Psoas muscle (tissue), 8 donors: ENCODE measurements at regions of chr6 and their contacts with region 1.

Region 1: DNA sequence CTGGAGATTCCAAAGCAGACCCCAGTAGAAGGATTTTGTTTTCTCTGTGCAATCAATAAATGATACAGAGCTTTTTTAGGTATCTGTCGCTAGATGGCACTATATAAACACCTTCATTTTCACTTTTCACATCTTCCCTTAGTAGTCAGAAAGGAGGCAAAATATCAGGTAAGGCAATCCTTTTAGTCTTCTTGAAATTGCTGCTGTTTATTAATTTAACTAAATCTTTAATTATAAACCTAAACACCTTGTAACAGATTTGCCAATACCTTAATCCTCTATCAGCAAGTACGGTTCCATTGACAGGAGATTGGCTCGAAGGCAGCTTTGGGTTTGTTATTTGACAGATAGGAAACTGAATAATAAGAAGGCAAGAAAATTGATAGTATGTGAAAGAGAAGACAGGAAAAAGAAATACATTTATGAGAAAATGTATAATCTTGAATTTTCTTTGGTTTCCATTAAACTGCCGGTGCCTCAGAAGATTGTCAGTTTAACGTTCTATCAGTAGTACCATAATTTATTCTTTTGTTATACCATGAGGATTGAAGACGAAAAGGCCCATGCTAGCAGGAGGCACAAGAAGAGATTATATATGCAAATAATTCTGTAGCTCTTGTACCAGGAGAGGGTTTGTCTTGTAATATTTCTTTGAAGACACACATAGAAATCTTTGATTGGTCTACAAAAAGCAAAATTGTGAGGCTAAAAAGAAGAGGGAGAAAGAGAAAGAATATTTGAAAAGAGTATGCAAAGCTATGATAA is 23.5 kb upstream of the IBTK start:
- DNase-seq: no peak
- ATAC-seq: peak in 1 of 4 donors; percentile 57
- H3K4me3 ChIP-seq: no peak overlapping the region
- H3K27ac ChIP-seq: no peak overlapping the region
- H3K4me1 ChIP-seq: no peaks in the 10 kb centered on the region
- H3K27me3 ChIP-seq: no peaks in the 10 kb centered on the region
- CTCF ChIP-seq: peak; percentile 65

Region 2: GRCh38 chr6:82616386-82617028 is 345.4 kb after region 1 on chr6:
- intact Hi-C with region 1: loop called in 1 of 2 experiments (anchors 10 kb)
- DNase-seq: no peak
- ATAC-seq: no peak
- H3K4me3 ChIP-seq: no peak overlapping the region
- H3K27ac ChIP-seq: no peak overlapping the region
- H3K4me1 ChIP-seq: no peaks in the 10 kb centered on the region
- H3K27me3 ChIP-seq: no peaks in the 10 kb centered on the region
- CTCF ChIP-seq: no peak

Region 3: GRCh38 chr6:83051377-83052172 is 780.5 kb after region 1 on chr6:
- intact Hi-C with region 1: loop called (anchors 1 to 5 kb)
- DNase-seq: no peak
- ATAC-seq: no peak
- H3K4me3 ChIP-seq: no peak overlapping the region
- H3K27ac ChIP-seq: no peak overlapping the region
- H3K4me1 ChIP-seq: peaks cover 17% of the 10 kb centered on the region
- H3K27me3 ChIP-seq: no peaks in the 10 kb centered on the region
- CTCF ChIP-seq: no peak

Region 4: GRCh38 chr6:83057705-83058321 is 786.8 kb after region 1 on chr6:
- intact Hi-C with region 1: loop called (anchors 1 to 5 kb)
- DNase-seq: no peak
- ATAC-seq: peak in 2 of 4 donors; percentile 53 to 69
- H3K4me3 ChIP-seq: no peak overlapping the region
- H3K27ac ChIP-seq: no peak overlapping the region
- H3K4me1 ChIP-seq: peaks cover 2% of the 10 kb centered on the region
- H3K27me3 ChIP-seq: no peaks in the 10 kb centered on the region
- CTCF ChIP-seq: peak; percentile 54